ENCODE measurements at regions of chr4 and their contacts with region 1.

Region 1: DNA sequence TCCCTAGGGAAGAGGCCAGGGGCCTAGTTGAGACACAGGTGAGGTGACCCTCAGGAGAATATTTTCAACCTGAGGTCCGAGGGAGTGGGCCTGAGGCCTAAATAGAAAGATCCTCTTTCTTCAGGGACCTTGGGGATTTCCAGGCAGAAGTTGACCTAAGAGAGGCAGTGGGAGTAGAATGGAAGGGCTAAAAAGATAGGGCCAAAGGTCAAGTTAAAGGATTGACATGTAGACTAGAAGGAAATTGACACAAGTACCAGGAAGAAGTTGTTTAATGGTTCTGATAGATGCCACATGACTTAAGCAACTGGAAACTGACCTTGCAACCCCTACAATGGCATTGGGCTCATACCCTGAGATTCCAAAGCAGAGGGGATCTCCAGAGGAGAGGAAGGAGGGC is 76.9 kb downstream of the SHROOM3 start:
- DNase-seq: no peak
- ATAC-seq: no peak
- H3K4me3 ChIP-seq: no peak overlapping the region
- H3K4me3 Mint-ChIP-seq: no peak overlapping the region
- H3K27ac ChIP-seq: no peak overlapping the region
- H3K27ac Mint-ChIP-seq: no peak overlapping the region
- H3K4me1 ChIP-seq: no peaks in the 10 kb centered on the region
- H3K4me1 Mint-ChIP-seq: no peaks in the 10 kb centered on the region
- H3K27me3 ChIP-seq: no peaks in the 10 kb centered on the region
- H3K27me3 Mint-ChIP-seq: peaks cover 0 to 6% (median 4%) of the 10 kb centered on the region in 5 donors

Region 2: DNA sequence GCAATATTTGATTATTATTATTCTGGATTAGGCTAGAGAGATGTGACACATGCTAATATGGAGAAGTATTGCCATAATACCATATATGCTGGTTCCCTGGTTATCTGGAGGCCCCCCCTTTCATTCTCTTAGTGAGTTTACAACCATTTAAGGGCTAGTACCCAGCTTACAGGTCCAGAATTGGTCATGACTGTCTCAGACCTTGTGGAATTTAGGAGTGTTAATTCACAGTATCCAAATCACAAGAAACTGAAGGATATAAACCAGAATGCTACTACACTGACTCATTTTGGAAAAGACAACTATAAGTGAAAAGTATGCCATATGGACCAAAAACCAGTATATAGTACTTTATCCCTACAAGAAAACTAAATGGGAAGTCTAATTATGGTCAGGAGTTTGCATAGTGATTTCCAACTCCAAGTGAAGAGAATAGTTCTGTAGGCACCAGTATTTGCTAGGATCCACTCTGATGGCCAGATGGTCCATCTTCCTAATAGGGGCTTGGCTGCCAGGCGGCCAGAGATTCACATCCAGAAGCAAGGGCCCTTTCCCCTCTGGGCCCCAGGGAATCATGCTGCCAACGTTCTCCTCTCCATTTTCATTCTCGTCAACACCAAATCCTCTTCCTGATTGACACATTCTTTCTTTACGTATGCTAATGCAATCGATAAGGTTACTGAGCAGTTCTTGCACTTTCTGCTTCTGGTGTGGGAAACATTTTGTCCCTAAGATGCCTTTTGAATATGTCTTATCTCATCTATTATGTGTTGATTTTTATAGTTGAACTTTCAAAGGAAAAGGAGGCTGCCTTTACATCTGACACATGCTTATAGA is 46.7 kb after region 1 on chr4:
- CTCF ChIA-PET with region 1: no interaction called
- POLR2A ChIA-PET with region 1: no interaction called
- intact Hi-C with region 1: no loop called
- DNase-seq: no peak
- ATAC-seq: no peak
- H3K4me3 ChIP-seq: no peak overlapping the region
- H3K4me3 Mint-ChIP-seq: no peak overlapping the region
- H3K27ac ChIP-seq: no peak overlapping the region
- H3K27ac Mint-ChIP-seq: no peak overlapping the region
- H3K4me1 ChIP-seq: no peaks in the 10 kb centered on the region
- H3K4me1 Mint-ChIP-seq: peaks cover 0 to 3% (median 0%) of the 10 kb centered on the region in 7 donors
- H3K27me3 ChIP-seq: no peaks in the 10 kb centered on the region
- H3K27me3 Mint-ChIP-seq: peaks cover 0 to 15% (median 5%) of the 10 kb centered on the region in 5 donors

Region 3: GRCh38 chr4:76748649-76749048 is 236.7 kb after region 1 on chr4:
- CTCF ChIA-PET with region 1: no interaction called
- POLR2A ChIA-PET with region 1: no interaction called
- intact Hi-C with region 1: loop called in 1 of 2 experiments (anchors 1 kb)
- DNase-seq: peak in 5 of 9 donors; percentile 5 to 23 (median 11)
- ATAC-seq: no peak
- H3K4me3 ChIP-seq: no peak overlapping the region
- H3K4me3 Mint-ChIP-seq: no peak overlapping the region
- H3K27ac ChIP-seq: no peak overlapping the region
- H3K27ac Mint-ChIP-seq: no peak overlapping the region
- H3K4me1 ChIP-seq: no peaks in the 10 kb centered on the region
- H3K4me1 Mint-ChIP-seq: peaks cover 0 to 4% (median 3%) of the 10 kb centered on the region in 7 donors
- H3K27me3 ChIP-seq: no peaks in the 10 kb centered on the region
- H3K27me3 Mint-ChIP-seq: peaks cover 26 to 36% (median 29%) of the 10 kb centered on the region in 5 donors

Region 4: GRCh38 chr4:77358315-77358928 is 846.5 kb after region 1 on chr4:
- CTCF ChIA-PET with region 1: no interaction called
- POLR2A ChIA-PET with region 1: no interaction called
- intact Hi-C with region 1: loop called in 1 of 2 experiments (anchors 5 kb)
- DNase-seq: peak in 4 of 9 donors; percentile 2 to 25 (median 16)
- ATAC-seq: no peak
- H3K4me3 ChIP-seq: no peak overlapping the region
- H3K4me3 Mint-ChIP-seq: no peak overlapping the region
- H3K27ac ChIP-seq: no peak overlapping the region
- H3K27ac Mint-ChIP-seq: no peak overlapping the region
- H3K4me1 ChIP-seq: no peaks in the 10 kb centered on the region
- H3K4me1 Mint-ChIP-seq: no peaks in the 10 kb centered on the region
- H3K27me3 ChIP-seq: no peaks in the 10 kb centered on the region
- H3K27me3 Mint-ChIP-seq: peaks cover 0 to 10% (median 0%) of the 10 kb centered on the region in 5 donors

Measured in naive thymus-derived CD4-positive, alpha-beta T cell (primary cell).